ENCODE measurements at regions of chr6 and their contacts with region 1.

Region 1: DNA sequence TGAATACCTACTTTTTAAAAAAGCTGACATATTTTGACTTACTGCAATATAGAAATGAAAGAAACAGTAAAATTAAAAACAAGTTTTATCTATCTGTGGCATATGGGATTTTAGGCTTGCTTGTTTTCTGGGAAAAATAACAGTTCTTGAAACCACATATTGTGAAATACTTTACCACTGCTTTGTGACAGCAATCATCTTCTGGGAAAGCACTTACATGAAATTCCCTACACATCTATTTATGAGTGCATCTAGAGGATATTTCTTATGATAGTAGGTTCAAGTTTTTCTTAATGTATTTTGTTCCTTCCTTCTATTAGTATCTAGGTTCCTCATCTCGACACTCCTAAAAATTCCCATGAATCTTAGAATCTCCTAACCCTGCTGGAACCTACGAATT is 75.2 kb downstream of the STXBP5 start:
- DNase-seq: no peak
- H3K4me3 Mint-ChIP-seq: no peak overlapping the region
- H3K27ac Mint-ChIP-seq: peak overlapping the region; percentile 83
- H3K4me1 Mint-ChIP-seq: peaks cover 41% of the 10 kb centered on the region
- H3K27me3 Mint-ChIP-seq: no peaks in the 10 kb centered on the region

Region 2: DNA sequence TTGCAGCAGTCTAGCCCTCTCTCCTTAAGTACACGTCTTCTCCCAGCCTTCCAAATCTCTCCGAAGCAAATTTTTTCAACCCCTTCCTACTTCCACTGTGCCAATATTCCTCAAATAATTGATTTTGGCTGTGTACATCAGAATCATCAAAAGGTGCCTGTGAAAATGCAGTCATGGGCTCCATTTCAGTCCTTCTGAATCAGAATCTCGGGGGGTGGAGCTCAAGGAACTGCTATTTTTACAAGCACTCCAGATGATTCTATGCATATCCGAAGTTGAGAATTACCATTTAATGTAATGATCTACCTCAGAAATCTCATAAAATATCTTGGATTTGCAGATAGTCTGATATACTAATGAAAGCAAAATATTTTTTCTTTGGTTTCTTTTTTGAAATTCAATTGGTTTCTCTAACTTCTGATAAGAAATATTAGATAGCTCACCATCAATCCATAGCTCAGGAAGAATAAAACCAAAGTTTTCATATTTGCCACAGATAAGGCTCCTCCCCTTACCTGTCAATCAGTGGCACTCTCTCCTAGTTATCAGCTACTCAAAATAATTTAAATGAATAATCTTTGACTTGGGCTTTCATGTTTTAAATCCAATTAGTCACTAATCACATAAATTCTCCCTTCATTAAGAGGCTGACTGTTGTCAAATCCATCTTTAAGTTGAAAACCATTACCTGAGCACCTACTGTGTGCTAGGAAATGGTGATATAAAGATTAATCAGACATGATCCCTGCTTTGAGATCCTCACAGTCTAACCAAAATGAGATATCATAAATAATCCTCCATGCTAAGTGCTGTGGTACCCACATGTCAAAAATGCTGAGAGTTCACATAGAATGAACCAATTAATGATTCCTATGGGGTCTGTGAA is 111.6 kb before region 1 on chr6:
- CTCF ChIA-PET with region 1: no interaction called
- POLR2A ChIA-PET with region 1: no interaction called
- intact Hi-C with region 1: loop called (anchors 1 kb)
- DNase-seq: no peak
- H3K4me3 Mint-ChIP-seq: no peak overlapping the region
- H3K27ac Mint-ChIP-seq: no peak overlapping the region
- H3K4me1 Mint-ChIP-seq: peaks cover 2% of the 10 kb centered on the region
- H3K27me3 Mint-ChIP-seq: no peaks in the 10 kb centered on the region

Region 3: GRCh38 chr6:147194652-147195411 is 84.6 kb before region 1 on chr6:
- CTCF ChIA-PET with region 1: no interaction called
- POLR2A ChIA-PET with region 1: no interaction called
- intact Hi-C with region 1: loop called (anchors 1 kb)
- DNase-seq: no peak
- H3K4me3 Mint-ChIP-seq: peak overlapping the region; percentile 21
- H3K27ac Mint-ChIP-seq: peak overlapping the region; percentile 87
- H3K4me1 Mint-ChIP-seq: peaks cover 21% of the 10 kb centered on the region
- H3K27me3 Mint-ChIP-seq: no peaks in the 10 kb centered on the region

Region 4: DNA sequence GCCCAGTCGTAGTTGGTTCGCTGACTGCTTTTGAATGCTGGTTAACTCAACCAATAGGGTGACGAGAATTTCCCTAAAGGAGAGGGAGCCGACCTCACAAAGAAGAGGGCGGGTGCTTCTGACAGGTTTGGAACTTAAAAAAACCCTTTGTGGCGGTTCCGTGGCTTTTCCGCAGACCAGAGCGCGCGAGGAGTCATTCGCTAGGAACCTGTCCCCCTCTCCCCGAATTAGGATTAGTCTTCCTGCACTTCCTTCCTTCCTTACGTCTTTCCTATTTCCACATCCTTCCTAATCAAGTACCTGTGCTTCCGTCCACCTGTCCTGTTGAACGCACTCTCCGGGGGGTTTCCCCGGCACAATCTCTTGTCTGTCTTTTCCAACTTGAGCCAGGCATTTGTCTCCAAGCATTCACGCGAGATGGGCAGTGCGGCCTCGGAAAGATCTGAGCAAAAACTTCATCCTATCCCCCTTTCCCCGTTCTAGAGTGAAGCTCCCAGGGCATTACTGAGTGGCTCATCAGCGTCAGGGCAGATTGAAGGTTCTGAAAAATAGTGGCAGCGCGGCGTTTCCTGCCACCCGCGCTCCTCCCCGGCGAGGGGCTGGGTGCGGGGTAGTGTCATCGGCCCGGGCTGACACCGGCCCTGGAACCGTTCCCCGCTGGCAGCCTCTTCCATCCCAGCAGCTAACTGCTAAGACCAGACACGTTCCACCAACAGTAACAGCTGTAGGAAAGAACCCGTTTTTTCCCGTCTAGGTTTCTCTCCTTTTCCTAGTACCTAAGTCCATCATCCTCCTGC is 76.7 kb before region 1 on chr6:
- CTCF ChIA-PET with region 1: no interaction called
- POLR2A ChIA-PET with region 1: interaction called, 6 read pairs
- intact Hi-C with region 1: loop called (anchors 1 kb)
- DNase-seq: peak; percentile 87
- H3K4me3 Mint-ChIP-seq: peak overlapping the region; percentile 81
- H3K27ac Mint-ChIP-seq: peak overlapping the region; percentile 96
- H3K4me1 Mint-ChIP-seq: peaks cover 21% of the 10 kb centered on the region
- H3K27me3 Mint-ChIP-seq: no peaks in the 10 kb centered on the region

Region 5: DNA sequence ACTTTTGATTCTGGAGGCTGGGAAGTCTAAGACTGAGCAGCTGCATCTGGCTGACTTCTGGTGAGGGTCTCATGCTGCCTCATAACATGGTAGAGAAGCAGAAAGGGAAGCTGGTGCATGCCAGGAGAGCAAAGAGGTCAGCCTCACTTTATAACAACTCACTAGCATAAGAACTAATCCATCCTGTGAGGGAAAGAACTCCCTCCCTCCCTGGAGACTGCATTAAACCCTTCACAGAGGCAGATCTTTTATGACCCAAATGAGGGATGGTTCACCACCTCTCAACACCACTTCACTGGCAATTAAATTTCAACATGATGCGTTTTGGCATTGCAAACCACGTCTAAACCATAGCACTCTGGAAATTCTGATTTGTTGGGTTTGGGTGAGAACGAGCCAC is 41.3 kb before region 1 on chr6:
- CTCF ChIA-PET with region 1: no interaction called
- POLR2A ChIA-PET with region 1: no interaction called
- intact Hi-C with region 1: no loop called
- DNase-seq: no peak
- H3K4me3 Mint-ChIP-seq: no peak overlapping the region
- H3K27ac Mint-ChIP-seq: no peak overlapping the region
- H3K4me1 Mint-ChIP-seq: peaks cover 2% of the 10 kb centered on the region
- H3K27me3 Mint-ChIP-seq: no peaks in the 10 kb centered on the region

Region 6: GRCh38 chr6:147268254-147268653 is 11.2 kb before region 1 on chr6:
- CTCF ChIA-PET with region 1: interaction called, 3 read pairs
- POLR2A ChIA-PET with region 1: interaction called, 6 read pairs
- intact Hi-C with region 1: loop called (anchors 1 kb)
- DNase-seq: no peak
- H3K4me3 Mint-ChIP-seq: no peak overlapping the region
- H3K27ac Mint-ChIP-seq: peak overlapping the region; percentile 70
- H3K4me1 Mint-ChIP-seq: peaks cover 18% of the 10 kb centered on the region
- H3K27me3 Mint-ChIP-seq: no peaks in the 10 kb centered on the region

Measured in activated CD4-positive, alpha-beta memory T cell treated with anti-CD3 and anti-CD28 coated beads for 36 hours (primary cell).